Posterior cingulate gyrus (tissue), 11 donors: ENCODE measurements at regions of chr15 and their contacts with region 1.

Region 1: GRCh38 chr15:52018693-52019387 is at the start of gene MAPK6:
- DNase-seq: peak; percentile 84 to 99 (median 88)

Region 2: GRCh38 chr15:51971375-51972133 is 47.3 kb before region 1 on chr15 and contains the start of gene LEO1:
- intact Hi-C with region 1: loop called (anchors 5 kb)
- DNase-seq: peak; percentile 83 to 98 (median 91)

Region 3: GRCh38 chr15:52085289-52085688 is 66.4 kb after region 1 on chr15:
- intact Hi-C with region 1: no loop called
- DNase-seq: no peak